SK-N-SH (cell line): ENCODE measurements at regions of chr4 and their contacts with region 1.

Region 1: DNA sequence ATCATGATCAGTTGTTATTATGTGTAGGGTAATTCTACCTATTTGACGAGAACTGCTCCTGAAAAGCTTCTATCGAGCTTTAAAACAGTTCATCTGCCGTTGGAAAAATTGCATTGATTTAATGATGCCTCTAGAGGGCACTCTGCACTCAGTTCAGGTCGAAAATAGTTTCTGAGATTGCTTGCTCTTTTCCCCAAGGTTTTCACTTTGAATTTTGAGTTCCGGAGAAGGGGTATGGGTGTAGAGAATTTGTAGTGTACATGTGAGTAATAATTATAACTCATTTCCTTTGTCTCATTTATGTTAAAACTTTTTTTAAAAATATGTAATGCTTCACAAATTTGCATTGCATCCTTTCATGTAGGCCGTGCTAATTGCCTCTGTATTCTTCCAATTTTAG is 28.4 kb upstream of the TNIP3 start:
- DNase-seq: peak; percentile 15
- H3K4me3 ChIP-seq: no peak overlapping the region
- H3K27ac ChIP-seq: no peak overlapping the region
- H3K4me1 ChIP-seq: no peaks in the 10 kb centered on the region
- H3K27me3 ChIP-seq: peaks cover 6% of the 10 kb centered on the region; the same call in 1 of the 2 replicates
- CTCF ChIP-seq: peak; percentile 89
- EP300 ChIP-seq: no peak
- RAD21 ChIP-seq: peak; percentile 83

Region 2: DNA sequence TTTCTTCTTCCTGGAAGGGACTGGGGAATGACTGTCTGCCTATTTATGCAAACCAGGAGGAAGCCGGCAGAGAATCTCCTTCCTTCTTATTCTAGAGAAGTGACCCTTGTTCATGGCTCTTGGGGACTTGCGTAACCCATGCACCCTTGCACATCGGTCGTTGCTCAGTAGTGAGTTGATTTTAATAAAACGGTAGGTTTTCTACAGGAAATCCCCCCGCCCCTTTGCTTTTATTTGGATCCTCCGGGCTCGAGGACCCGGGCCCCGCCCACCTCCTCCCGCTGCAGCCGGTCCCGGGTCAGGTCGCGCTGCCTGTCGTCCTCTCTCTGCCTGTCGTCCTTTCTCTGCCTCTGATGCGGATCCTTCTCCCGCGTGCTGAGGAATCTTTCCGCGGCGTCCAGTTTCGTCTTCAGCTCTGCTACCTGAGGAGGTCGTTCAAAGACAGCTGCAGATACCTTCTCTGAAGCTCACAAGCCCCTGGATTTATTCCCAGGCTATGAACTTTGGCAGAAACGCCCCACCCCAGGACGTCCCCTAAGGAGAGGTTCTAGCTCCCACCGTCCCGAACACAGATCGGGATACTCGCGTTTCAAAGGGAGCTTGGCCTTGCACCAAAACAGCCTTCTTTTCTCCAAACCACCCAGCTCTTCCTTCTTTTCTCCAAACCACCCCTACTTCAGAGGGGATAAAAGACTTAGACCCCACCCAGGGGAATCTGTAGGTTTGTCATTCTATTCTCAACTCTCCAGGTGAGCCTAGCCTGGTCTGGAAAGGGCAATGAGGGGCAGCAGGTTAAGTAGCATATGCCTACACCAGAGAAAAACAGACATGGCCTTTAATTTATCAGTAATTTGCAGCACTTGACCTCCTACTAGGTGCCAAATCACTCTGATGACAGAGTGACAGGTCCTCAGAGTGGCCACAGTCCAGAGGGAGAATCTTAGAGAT is 35.4 kb before region 1 on chr4:
- CTCF ChIA-PET with region 1: interaction called, 11 read pairs
- POLR2A ChIA-PET with region 1: no interaction called
- DNase-seq: peak; percentile 39
- H3K4me3 ChIP-seq: peak overlapping the region; percentile 51 to 65
- H3K27ac ChIP-seq: peak overlapping the region in 1 of 2 experiments; percentile 46; a peak in 1 of 4 replicates
- H3K4me1 ChIP-seq: peaks cover 5 to 9% of the 10 kb centered on the region in 2 experiments; a peak in 2 of 4 replicates
- H3K27me3 ChIP-seq: no peaks in the 10 kb centered on the region
- CTCF ChIP-seq: no peak
- EP300 ChIP-seq: no peak
- RAD21 ChIP-seq: no peak

Region 3: GRCh38 chr4:121182296-121182695 is 10.2 kb before region 1 on chr4:
- CTCF ChIA-PET with region 1: interaction called, 20 read pairs
- POLR2A ChIA-PET with region 1: no interaction called
- DNase-seq: no peak
- H3K4me3 ChIP-seq: no peak overlapping the region; a peak in 1 of 4 replicates
- H3K27ac ChIP-seq: peak overlapping the region; percentile 28 to 34; a peak in 2 of 4 replicates
- H3K4me1 ChIP-seq: no peaks in the 10 kb centered on the region
- H3K27me3 ChIP-seq: no peaks in the 10 kb centered on the region
- CTCF ChIP-seq: no peak
- EP300 ChIP-seq: no peak
- RAD21 ChIP-seq: no peak

Region 4: DNA sequence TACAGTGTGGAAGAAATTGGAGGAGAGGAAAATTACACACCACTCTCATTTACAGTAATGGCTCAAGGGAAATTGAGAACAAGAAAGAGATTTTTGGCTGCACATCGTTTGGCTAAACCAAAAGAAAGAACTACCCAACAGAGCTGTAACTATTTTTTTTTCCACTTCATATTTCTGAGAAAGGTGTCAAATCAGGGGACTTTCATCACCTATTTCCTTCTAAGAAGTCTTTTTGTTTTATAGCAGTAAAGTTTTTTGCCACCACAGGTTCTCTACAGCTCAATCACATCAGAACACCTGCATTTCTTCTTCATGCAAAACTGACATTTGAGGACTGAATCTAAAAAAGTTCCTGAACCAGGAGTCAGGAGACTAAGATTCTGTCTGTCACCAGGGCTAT is 29.1 kb after region 1 on chr4:
- CTCF ChIA-PET with region 1: interaction called, 12 read pairs
- POLR2A ChIA-PET with region 1: no interaction called
- DNase-seq: no peak
- H3K4me3 ChIP-seq: no peak overlapping the region
- H3K27ac ChIP-seq: no peak overlapping the region
- H3K4me1 ChIP-seq: no peaks in the 10 kb centered on the region
- H3K27me3 ChIP-seq: peaks cover 11% of the 10 kb centered on the region
- CTCF ChIP-seq: no peak
- EP300 ChIP-seq: no peak
- RAD21 ChIP-seq: no peak

Region 5: DNA sequence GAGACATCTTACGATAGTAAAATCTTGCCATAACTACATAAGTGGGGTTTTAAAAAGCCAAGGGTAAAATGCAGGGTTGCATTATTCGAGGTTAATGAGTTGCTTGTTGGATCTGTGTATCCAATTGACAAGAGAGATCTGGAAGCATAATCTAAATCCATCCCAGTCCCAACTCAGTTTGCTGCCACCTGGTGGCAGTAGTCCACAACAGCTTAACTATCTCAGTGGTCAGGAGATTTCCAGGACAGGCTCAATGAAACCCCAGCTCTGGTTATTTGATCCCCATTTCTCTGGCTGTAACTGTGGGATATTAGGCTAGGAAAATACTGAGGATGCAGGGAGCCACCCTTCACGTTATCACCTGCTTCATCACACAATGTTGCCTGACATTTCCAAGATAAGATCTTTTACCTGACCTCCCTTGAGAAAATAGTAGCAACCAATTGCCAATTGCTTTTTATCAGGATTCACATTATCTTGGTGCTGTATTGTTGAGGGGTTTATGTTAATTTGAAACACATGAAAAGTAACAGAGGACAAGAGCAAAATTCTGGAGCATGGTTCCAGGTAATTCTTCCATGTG is 59.8 kb after region 1 on chr4:
- CTCF ChIA-PET with region 1: interaction called, 45 read pairs
- POLR2A ChIA-PET with region 1: interaction called, 4 read pairs
- DNase-seq: peak; percentile 66
- H3K4me3 ChIP-seq: no peak overlapping the region
- H3K27ac ChIP-seq: no peak overlapping the region
- H3K4me1 ChIP-seq: no peaks in the 10 kb centered on the region
- H3K27me3 ChIP-seq: no peaks in the 10 kb centered on the region; the same call in 1 of the 2 replicates
- CTCF ChIP-seq: peak; percentile 86
- EP300 ChIP-seq: no peak
- RAD21 ChIP-seq: peak; percentile 73

Region 6: GRCh38 chr4:121380776-121381462 is 188.4 kb after region 1 on chr4 and contains the start of gene QRFPR:
- CTCF ChIA-PET with region 1: no interaction called
- POLR2A ChIA-PET with region 1: no interaction called
- DNase-seq: peak; percentile 9
- H3K4me3 ChIP-seq: no peak within 1 kb of the TSS
- H3K27ac ChIP-seq: no peak within 1 kb of the TSS
- H3K4me1 ChIP-seq: no peaks in the 10 kb centered on the region
- H3K27me3 ChIP-seq: peaks cover 48% of the 10 kb centered on the region
- CTCF ChIP-seq: no peak
- EP300 ChIP-seq: no peak
- RAD21 ChIP-seq: no peak
- polyA plus RNA-seq, gene QRFPR: not detected in 2 replicates